ENCODE measurements at regions of chr9 and their contacts with region 1.

Region 1: DNA sequence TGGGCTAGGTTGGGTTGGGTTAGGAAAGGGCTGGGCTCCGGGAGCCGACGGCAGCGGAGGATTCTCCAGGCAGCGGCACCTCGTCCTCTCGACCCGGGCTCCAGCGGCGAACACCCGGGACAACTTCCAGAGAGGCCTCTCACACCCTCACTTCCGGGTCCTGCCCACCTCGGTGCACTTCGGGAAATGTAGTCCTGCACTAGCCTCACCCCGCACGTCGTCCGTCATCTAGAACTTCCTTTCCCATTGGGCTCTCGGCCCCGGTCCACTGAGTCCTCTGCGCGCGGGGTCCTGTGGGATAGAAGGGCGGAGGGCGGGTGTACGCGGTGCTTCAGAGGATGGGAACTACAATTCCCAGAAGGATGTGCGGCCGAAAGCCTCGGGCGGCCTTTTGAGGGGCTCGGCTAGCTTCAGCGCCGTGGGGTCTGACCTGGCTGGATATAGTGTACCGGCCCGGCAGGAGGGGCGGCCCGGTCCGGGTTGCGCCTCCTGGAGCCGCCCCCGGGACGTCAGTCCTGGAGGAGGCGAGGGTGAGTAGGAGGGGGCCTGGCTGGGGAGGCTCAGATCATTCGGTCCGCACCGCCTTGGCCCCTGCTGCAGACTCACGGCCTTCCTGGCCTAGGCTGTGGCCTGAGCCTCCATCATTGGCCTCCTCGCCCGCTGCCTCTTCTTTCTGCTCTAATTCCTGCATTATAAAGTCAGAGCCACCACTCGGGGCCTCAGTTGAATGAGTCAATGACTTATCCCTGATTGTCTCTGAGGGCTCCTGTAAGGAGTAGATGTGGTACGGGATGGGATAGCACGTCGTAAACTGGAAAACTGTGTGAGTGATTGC is at the starts of genes ERP44 and INVS:
- DNase-seq: peak; percentile 98 to 99
- H3K4me3 ChIP-seq: peak within 1 kb of the TSS; percentile 99
- H3K4me3 Mint-ChIP-seq: peak within 1 kb of the TSS; percentile 96
- H3K27ac Mint-ChIP-seq: peak within 1 kb of the TSS; percentile 97
- H3K4me1 ChIP-seq: peaks cover 6% of the 10 kb centered on the region; the same call in 1 of the 2 replicates
- H3K4me1 Mint-ChIP-seq: peaks cover 7% of the 10 kb centered on the region
- H3K27me3 ChIP-seq: no peaks in the 10 kb centered on the region
- H3K27me3 Mint-ChIP-seq: no peaks in the 10 kb centered on the region
- CTCF ChIP-seq: no peak
- total RNA-seq, gene ERP44: 23.9 and 25.6 TPM in 2 replicates
- total RNA-seq, gene INVS: 15.6 and 17.3 TPM in 2 replicates

Region 2: DNA sequence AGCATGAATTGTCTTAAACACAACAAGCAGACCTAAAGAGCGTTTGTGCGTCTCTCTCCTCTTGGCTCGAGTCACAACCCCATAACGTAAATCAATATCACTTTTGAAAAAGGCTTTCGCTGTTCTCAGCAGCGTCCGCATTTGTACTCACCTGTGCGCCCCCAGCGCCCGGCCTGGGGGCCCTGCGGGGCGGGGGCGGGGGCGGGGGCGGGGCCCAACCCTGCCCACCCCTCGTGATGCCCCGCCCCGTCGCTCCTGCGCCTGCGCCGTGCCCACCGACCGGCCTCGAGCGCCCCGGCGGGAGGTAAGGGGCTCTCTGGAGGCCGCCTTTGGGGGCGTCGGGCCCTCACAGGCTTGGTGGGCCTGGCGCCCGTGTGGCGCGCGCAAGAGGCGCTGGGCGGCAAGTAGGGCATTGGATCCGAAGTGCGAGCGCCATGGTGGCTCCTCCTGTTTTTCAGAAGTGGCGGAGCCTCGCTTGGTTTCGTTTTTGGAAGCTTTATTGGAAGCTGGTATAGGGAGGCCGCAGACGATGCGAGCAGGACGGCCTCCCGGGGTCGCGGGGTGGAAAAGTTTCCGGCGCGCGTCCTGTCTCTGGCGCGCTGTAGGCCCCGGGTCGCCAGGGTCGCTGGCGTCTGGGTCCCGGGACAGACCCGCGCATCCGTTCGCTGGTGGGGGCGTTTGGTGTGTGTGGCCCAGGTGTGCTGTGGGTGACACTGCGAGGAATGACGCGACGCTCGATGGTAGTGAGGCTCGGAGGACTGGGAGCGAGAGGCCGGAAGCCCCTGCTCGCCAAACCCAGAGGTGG is 192.5 kb before region 1 on chr9 and contains the start of gene STX17:
- CTCF ChIA-PET with region 1: no interaction called
- POLR2A ChIA-PET with region 1: no interaction called
- intact Hi-C with region 1: loop called (anchors 2 kb)
- DNase-seq: peak; percentile 80 to 88
- H3K4me3 ChIP-seq: peak within 1 kb of the TSS; percentile 89
- H3K4me3 Mint-ChIP-seq: peak within 1 kb of the TSS; percentile 76
- H3K27ac Mint-ChIP-seq: peak within 1 kb of the TSS; percentile 70
- H3K4me1 ChIP-seq: peaks cover 10% of the 10 kb centered on the region
- H3K4me1 Mint-ChIP-seq: peaks cover 18% of the 10 kb centered on the region
- H3K27me3 ChIP-seq: no peaks in the 10 kb centered on the region
- H3K27me3 Mint-ChIP-seq: peaks cover 2% of the 10 kb centered on the region
- CTCF ChIP-seq: no peak
- total RNA-seq, gene STX17: 40.2 and 41.1 TPM in 2 replicates

Region 3: GRCh38 chr9:100216178-100216787 is 117.2 kb after region 1 on chr9:
- CTCF ChIA-PET with region 1: no interaction called
- POLR2A ChIA-PET with region 1: no interaction called
- intact Hi-C with region 1: loop called (anchors 5 kb)
- DNase-seq: peak; percentile 44 to 58
- H3K4me3 ChIP-seq: no peak overlapping the region
- H3K4me3 Mint-ChIP-seq: no peak overlapping the region
- H3K27ac Mint-ChIP-seq: no peak overlapping the region
- H3K4me1 ChIP-seq: no peaks in the 10 kb centered on the region
- H3K4me1 Mint-ChIP-seq: no peaks in the 10 kb centered on the region
- H3K27me3 ChIP-seq: no peaks in the 10 kb centered on the region
- H3K27me3 Mint-ChIP-seq: no peaks in the 10 kb centered on the region
- CTCF ChIP-seq: peak; percentile 50 to 65

Region 4: GRCh38 chr9:100309992-100310391 is 210.9 kb after region 1 on chr9:
- CTCF ChIA-PET with region 1: no interaction called
- POLR2A ChIA-PET with region 1: no interaction called
- intact Hi-C with region 1: no loop called
- DNase-seq: no peak
- H3K4me3 ChIP-seq: no peak overlapping the region
- H3K4me3 Mint-ChIP-seq: no peak overlapping the region
- H3K27ac Mint-ChIP-seq: no peak overlapping the region
- H3K4me1 ChIP-seq: no peaks in the 10 kb centered on the region
- H3K4me1 Mint-ChIP-seq: no peaks in the 10 kb centered on the region
- H3K27me3 ChIP-seq: no peaks in the 10 kb centered on the region
- H3K27me3 Mint-ChIP-seq: no peaks in the 10 kb centered on the region
- CTCF ChIP-seq: no peak

Region 5: GRCh38 chr9:100322954-100323536 is 223.9 kb after region 1 on chr9:
- CTCF ChIA-PET with region 1: no interaction called
- POLR2A ChIA-PET with region 1: no interaction called
- intact Hi-C with region 1: loop called (anchors 5 kb)
- DNase-seq: peak; percentile 26 to 44
- H3K4me3 ChIP-seq: no peak overlapping the region
- H3K4me3 Mint-ChIP-seq: no peak overlapping the region
- H3K27ac Mint-ChIP-seq: no peak overlapping the region
- H3K4me1 ChIP-seq: no peaks in the 10 kb centered on the region
- H3K4me1 Mint-ChIP-seq: no peaks in the 10 kb centered on the region
- H3K27me3 ChIP-seq: no peaks in the 10 kb centered on the region
- H3K27me3 Mint-ChIP-seq: no peaks in the 10 kb centered on the region
- CTCF ChIP-seq: peak; percentile 53 to 58

Measured in Caco-2 (cell line).